Heart right ventricle (tissue), 16 donors: ENCODE measurements at regions of chr3 and their contacts with region 1.

Region 1: DNA sequence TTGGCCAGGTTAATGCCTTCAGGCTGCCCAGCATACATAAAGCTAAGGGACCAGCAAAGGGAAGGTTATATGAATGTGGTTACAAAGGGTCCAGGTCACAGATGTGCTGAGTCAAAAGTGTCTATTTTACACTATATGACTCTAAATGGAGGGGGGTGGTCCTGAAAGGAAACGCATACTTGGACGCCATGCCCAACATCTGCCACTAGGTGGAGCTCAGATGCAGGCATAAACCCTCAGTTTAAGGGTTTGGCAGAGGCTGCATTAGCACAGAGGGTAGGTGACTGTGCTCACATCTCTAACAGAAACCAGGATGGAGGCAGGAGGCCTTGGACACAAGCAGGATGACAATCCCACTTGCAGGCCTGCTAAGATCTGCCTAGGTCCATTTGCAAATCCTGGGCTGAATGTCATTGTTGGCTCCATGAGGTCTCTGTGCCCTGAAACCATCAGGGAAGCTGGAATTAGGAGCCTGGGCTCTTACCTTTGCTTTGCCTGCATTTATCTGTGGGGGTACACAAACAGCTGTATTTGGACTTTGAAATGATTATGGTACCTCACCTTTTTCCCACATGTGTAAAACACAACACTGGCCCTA is 55.8 kb downstream of the ZNF621 start:
- DNase-seq: peak; percentile 51 to 62
- ATAC-seq: peak in 7 of 8 donors; percentile 46 to 71 (median 57)
- H3K4me3 ChIP-seq: no peak overlapping the region
- H3K27ac ChIP-seq: no peak overlapping the region
- H3K4me1 ChIP-seq: peaks cover 0 to 29% (median 9%) of the 10 kb centered on the region in 9 donors
- H3K27me3 ChIP-seq: no peaks in the 10 kb centered on the region
- CTCF ChIP-seq: peak; percentile 89 to 97 (median 95)

Region 2: DNA sequence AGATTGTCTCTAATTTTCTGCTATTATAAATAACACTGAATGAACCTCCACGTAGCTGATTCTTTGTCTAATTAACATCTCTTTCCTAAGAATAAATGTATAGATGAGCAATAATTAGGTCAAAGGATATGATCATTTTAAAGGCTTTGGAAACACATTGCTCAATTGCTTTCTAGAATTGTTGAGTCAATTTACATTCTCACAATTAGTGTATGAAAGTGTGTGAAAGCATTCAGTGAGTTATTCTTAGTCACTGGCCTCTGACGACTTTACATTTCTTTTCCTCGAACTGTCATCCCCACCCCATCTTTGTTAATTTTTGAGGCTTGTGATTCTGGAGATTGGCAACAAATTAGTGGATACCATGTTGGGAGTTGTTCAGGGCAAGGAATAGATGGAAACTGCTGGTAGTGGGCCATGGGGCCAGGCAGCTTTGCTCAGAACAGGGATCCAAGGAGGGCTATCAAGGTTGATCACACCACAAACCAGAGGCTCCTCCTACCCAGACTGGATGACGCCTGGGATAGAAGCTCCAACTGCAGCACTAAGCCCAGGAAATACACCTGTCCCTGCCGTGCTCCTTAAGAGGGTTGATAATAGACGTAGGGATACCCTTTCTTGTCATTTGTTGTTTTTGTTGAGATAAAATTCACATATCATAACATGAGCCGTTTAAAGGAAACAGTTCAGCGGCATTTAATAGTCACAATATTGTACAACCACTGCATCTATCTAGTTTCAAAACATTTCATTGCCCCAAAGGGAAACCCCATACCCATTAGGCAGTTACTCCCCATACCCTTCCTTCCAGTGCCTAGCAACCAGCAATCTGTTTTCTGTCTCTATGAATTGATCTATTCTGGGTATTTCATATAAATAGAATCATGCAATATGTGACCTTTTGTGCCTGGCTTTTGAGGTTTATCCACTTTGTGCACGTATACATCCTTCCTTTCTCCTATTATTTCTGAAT is 243.2 kb before region 1 on chr3:
- intact Hi-C with region 1: loop called in 1 of 10 experiments (anchors 5 kb)
- DNase-seq: no peak
- ATAC-seq: no peak
- H3K4me3 ChIP-seq: no peak overlapping the region
- H3K27ac ChIP-seq: no peak overlapping the region
- H3K4me1 ChIP-seq: peaks cover 0 to 10% (median 3%) of the 10 kb centered on the region in 9 donors
- H3K27me3 ChIP-seq: no peaks in the 10 kb centered on the region
- CTCF ChIP-seq: no peak

Region 3: DNA sequence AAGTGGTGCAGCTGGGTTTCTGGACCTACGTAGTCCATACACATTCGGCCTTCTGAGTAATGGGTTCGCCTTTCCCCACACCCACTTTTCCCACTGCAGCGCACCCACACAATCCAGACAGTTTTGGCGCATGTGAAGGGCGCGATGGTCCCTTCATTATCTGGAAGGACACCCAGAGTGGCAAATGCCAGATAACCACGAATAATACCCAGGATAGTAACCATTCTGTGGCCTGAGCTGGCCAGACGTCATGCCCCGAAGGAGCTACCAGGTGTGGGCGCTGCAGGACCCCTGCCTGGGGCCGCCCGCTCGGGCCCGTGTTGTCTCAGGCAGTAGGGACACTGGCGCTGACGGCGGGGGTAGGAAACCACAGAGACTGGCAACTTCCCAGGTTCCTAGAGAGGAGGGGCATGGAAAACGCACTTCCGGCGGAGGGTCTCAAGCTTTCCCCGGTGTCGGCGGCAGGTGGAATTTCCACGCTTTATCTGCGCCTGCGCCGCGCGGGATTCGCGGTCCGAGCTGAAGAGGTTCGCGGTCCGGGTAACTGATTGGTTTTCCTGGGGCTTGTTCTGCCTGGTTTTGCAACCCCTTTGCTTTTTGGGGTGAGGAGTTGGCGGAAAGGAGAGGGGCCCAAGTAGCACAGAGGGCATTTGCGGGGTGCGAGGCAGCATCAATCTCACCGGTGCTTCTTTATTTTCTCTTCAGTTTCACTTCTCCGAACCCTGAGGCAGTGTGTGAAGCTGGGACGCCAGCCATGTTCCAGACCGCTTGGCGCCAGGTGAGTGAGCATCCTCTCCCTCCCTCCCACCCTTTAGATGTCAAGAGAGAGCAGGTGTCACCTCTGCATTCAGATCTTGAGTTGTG is 74.8 kb before region 1 on chr3 and contains the start of gene ZNF620:
- intact Hi-C with region 1: no loop called
- DNase-seq: peak; percentile 73 to 86
- ATAC-seq: peak; percentile 92 to 98 (median 96)
- H3K4me3 ChIP-seq: peak within 1 kb of the TSS; percentile 46 to 77 (median 68)
- H3K27ac ChIP-seq: peak within 1 kb of the TSS; percentile 38 to 85 (median 74)
- H3K4me1 ChIP-seq: peaks cover 0 to 24% (median 12%) of the 10 kb centered on the region in 9 donors
- H3K27me3 ChIP-seq: no peaks in the 10 kb centered on the region
- CTCF ChIP-seq: peak in 7 of 9 donors; percentile 17 to 61 (median 34)
- total RNA-seq, gene ZNF620: 1.3 to 3.6 (median 2.7) TPM

Region 4: DNA sequence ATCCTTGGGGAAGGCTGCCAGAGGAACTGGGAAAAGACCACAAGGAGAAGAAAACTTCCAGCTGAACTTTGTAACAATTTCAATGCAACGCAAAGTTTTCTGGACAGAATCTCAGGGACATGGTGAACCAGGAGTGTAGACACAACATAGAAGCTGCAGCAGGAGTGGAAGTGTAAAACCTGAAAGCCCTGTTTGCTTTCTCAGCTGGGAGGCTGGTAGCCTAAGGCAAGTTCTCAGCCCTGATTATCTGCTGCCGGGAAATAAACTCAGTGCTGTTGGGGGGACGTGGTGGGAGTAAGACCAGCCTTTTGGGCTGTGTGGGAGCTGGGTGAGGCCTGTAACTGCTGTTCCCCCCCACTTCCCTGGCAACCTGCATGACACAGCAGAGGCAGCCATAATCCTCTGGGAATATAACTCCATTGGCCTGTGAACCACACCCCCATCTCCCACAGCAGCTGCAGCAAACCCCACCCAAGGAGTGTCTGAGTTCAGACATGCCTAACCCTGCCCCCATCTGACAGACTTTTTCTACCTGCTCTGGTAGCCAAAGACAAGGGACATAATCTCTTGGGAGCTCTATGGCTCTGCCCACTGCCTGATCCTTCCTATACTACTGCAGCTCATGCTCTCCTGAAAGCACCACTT is 50.9 kb after region 1 on chr3:
- intact Hi-C with region 1: no loop called
- DNase-seq: no peak
- ATAC-seq: no peak
- H3K4me3 ChIP-seq: no peak overlapping the region
- H3K27ac ChIP-seq: no peak overlapping the region
- H3K4me1 ChIP-seq: no peaks in the 10 kb centered on the region
- H3K27me3 ChIP-seq: no peaks in the 10 kb centered on the region
- CTCF ChIP-seq: no peak

Region 5: DNA sequence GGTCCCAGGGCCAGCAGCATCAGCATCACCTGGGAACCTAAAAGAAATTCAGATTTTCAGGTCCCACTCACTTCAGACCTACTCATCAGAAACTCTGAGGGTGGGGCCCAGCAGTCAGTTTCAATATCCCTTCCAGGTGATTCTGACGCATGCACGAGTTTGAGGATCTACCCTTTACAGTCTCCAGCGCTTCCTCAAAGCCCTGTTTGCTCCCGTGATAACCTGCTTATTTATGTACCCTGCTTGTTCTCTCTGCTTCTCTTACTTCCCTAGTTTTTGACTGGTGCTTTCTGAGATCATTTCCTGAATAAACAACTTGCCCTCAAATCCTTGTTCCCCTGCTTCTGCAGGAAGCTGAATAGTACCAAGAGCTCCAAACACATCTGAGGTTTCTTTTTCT is 189.5 kb after region 1 on chr3:
- intact Hi-C with region 1: loop called in 3 of 10 experiments (anchors 10 kb)
- DNase-seq: no peak
- ATAC-seq: peak in 6 of 8 donors; percentile 40 to 77 (median 57)
- H3K4me3 ChIP-seq: no peak overlapping the region
- H3K27ac ChIP-seq: peak overlapping the region in 6 of 10 donors; percentile 31 to 57 (median 46)
- H3K4me1 ChIP-seq: peaks cover 0 to 31% (median 14%) of the 10 kb centered on the region in 9 donors
- H3K27me3 ChIP-seq: peaks cover 0 to 5% (median 0%) of the 10 kb centered on the region in 7 donors
- CTCF ChIP-seq: no peak

Region 6: GRCh38 chr3:40877631-40878463 is 297.3 kb after region 1 on chr3:
- intact Hi-C with region 1: loop called in 1 of 10 experiments (anchors 10 kb)
- DNase-seq: peak; percentile 69 to 81
- ATAC-seq: peak; percentile 81 to 94 (median 91)
- H3K4me3 ChIP-seq: peak overlapping the region in 1 of 10 donors; percentile 23
- H3K27ac ChIP-seq: peak overlapping the region; percentile 60 to 88 (median 79)
- H3K4me1 ChIP-seq: peaks cover 18 to 51% (median 32%) of the 10 kb centered on the region in 9 donors
- H3K27me3 ChIP-seq: no peaks in the 10 kb centered on the region
- CTCF ChIP-seq: no peak

Region 7: DNA sequence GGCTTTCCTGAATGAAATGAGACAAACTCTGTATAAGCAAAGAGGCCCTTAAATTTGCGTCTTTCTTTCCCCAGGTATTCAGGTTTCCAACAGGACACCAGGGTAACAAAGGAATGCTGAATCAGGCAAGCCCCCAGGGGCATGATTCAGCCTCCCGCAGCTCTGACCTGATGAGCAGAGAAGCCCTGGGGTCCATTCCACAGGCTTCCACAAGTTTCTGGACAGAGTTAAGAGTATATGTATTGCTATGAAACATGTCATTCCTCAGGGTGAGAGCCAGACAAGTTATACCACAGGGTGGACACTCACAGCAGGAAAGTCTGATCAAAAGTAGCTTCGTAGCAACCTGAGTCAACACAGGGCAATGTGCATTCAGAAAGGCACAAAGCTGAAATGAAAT is 550.6 kb after region 1 on chr3:
- intact Hi-C with region 1: no loop called
- DNase-seq: no peak
- ATAC-seq: no peak
- H3K4me3 ChIP-seq: no peak overlapping the region
- H3K27ac ChIP-seq: no peak overlapping the region
- H3K4me1 ChIP-seq: no peaks in the 10 kb centered on the region
- H3K27me3 ChIP-seq: no peaks in the 10 kb centered on the region
- CTCF ChIP-seq: no peak

Region 8: GRCh38 chr3:41198950-41199865 is 618.6 kb after region 1 on chr3 and contains the start of gene CTNNB1:
- intact Hi-C with region 1: loop called in 8 of 10 experiments (anchors 1 to 10 kb)
- DNase-seq: peak; percentile 93 to 95
- ATAC-seq: peak; percentile 87 to 98 (median 93)
- H3K4me3 ChIP-seq: peak within 1 kb of the TSS; percentile 63 to 96 (median 80)
- H3K27ac ChIP-seq: peak within 1 kb of the TSS; percentile 89 to 99 (median 98)
- H3K4me1 ChIP-seq: peaks cover 0 to 42% (median 35%) of the 10 kb centered on the region in 9 donors
- H3K27me3 ChIP-seq: no peaks in the 10 kb centered on the region
- CTCF ChIP-seq: peak in 6 of 9 donors; percentile 7 to 43 (median 23)
- total RNA-seq, gene CTNNB1: 148 to 218 (median 181) TPM

Region 9: GRCh38 chr3:41716471-41716870 is 1135.9 kb after region 1 on chr3:
- intact Hi-C with region 1: loop called in 5 of 10 experiments (anchors 5 to 10 kb)
- DNase-seq: no peak
- ATAC-seq: no peak
- H3K4me3 ChIP-seq: no peak overlapping the region
- H3K27ac ChIP-seq: no peak overlapping the region
- H3K4me1 ChIP-seq: peaks cover 0 to 8% (median 0%) of the 10 kb centered on the region in 9 donors
- H3K27me3 ChIP-seq: no peaks in the 10 kb centered on the region
- CTCF ChIP-seq: peak in 7 of 9 donors; percentile 28 to 50 (median 41)